Activated T-helper 1 cell treated with anti-CD3 and anti-CD28 coated beads, Interleukin-12 subunit alpha, Interleukin-12 subunit beta, Interleukin-2, Interleukin-4 antibody, amounts not matched to agents 30 ng/mL and 10 ng/mL and 1 ng/mL, durations not matched to agents 14 hours and 24 hours and 36 hours (primary cell): ENCODE measurements at regions of chrX and their contacts with region 1.

Region 1: GRCh38 chrX:30702736-30703135 is 49.5 kb downstream of the GK start:
- DNase-seq: no peak
- H3K4me3 Mint-ChIP-seq: no peak overlapping the region
- H3K27ac Mint-ChIP-seq: peak overlapping the region; percentile 48
- H3K4me1 Mint-ChIP-seq: peaks cover 12% of the 10 kb centered on the region
- H3K27me3 Mint-ChIP-seq: no peaks in the 10 kb centered on the region

Region 2: GRCh38 chrX:30635630-30636029 is 67.1 kb before region 1 on chrX:
- intact Hi-C with region 1: no loop called
- DNase-seq: no peak
- H3K4me3 Mint-ChIP-seq: no peak overlapping the region
- H3K27ac Mint-ChIP-seq: no peak overlapping the region
- H3K4me1 Mint-ChIP-seq: peaks cover 2% of the 10 kb centered on the region
- H3K27me3 Mint-ChIP-seq: no peaks in the 10 kb centered on the region

Region 3: DNA sequence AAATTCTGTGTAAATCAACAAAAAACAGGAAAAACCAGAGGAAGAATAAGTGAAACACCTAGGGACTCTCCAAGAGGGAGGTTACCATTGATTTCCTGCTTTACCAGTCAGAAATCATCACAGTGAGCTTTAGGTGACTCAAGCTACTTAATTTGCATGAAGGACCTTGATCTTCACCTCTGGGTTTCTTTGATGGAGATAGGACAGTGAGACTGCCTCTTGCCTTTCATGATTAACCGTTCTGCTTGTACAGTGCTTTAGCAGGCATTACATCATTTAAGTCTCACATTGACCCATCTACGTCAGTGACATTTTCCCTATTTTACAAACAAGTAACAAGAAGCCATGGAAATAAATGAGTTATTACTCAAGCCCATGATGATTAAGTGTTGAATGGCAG is 52.9 kb before region 1 on chrX:
- intact Hi-C with region 1: no loop called
- DNase-seq: peak; percentile 21
- H3K4me3 Mint-ChIP-seq: peak overlapping the region; percentile 45
- H3K27ac Mint-ChIP-seq: peak overlapping the region; percentile 97
- H3K4me1 Mint-ChIP-seq: peaks cover 34% of the 10 kb centered on the region
- H3K27me3 Mint-ChIP-seq: no peaks in the 10 kb centered on the region

Region 4: GRCh38 chrX:30690330-30690729 is 12.4 kb before region 1 on chrX:
- intact Hi-C with region 1: loop called (anchors 2 kb)
- DNase-seq: no peak
- H3K4me3 Mint-ChIP-seq: no peak overlapping the region
- H3K27ac Mint-ChIP-seq: no peak overlapping the region
- H3K4me1 Mint-ChIP-seq: peaks cover 4% of the 10 kb centered on the region
- H3K27me3 Mint-ChIP-seq: no peaks in the 10 kb centered on the region

Region 5: DNA sequence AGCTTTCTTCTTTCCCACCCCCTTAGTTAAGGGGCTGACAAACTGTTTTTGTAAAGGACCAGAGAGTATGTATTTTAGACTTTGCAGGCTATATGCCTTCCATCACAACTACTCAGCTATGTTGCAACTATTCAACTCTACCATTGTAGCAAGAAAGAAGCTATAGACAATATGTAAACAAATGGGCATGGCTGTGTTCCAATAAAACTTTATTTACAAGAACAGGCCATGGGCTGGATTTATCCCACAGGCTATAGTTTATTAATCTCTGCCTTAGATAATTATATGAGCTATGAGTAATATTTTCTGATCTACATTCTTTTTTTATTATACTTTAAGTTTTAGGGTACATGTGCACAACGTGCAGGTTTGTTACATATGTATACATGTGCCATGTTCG is 64.7 kb after region 1 on chrX:
- intact Hi-C with region 1: no loop called
- DNase-seq: no peak
- H3K4me3 Mint-ChIP-seq: no peak overlapping the region
- H3K27ac Mint-ChIP-seq: no peak overlapping the region
- H3K4me1 Mint-ChIP-seq: no peaks in the 10 kb centered on the region
- H3K27me3 Mint-ChIP-seq: no peaks in the 10 kb centered on the region